ENCODE measurements at regions of chr17 and their contacts with region 1.

Region 1: GRCh38 chr17:33038740-33039139 is 47.1 kb downstream of the SPACA3 start:
- DNase-seq: no peak
- H3K4me3 ChIP-seq: no peak overlapping the region
- H3K27ac ChIP-seq: no peak overlapping the region
- H3K4me1 ChIP-seq: no peaks in the 10 kb centered on the region
- H3K27me3 ChIP-seq: peaks cover 0 to 13% (median 0%) of the 10 kb centered on the region in 3 donors
- CTCF ChIP-seq: peak in 3 of 4 experiments; percentile 24 to 30 (median 26)
- EP300 ChIP-seq: no peak
- POLR2A ChIP-seq: no peak

Region 2: GRCh38 chr17:33142705-33143299 is 104.1 kb after region 1 on chr17:
- intact Hi-C with region 1: no loop called
- DNase-seq: no peak
- H3K4me3 ChIP-seq: no peak overlapping the region
- H3K27ac ChIP-seq: no peak overlapping the region
- H3K4me1 ChIP-seq: no peaks in the 10 kb centered on the region
- H3K27me3 ChIP-seq: no peaks in the 10 kb centered on the region
- CTCF ChIP-seq: no peak
- EP300 ChIP-seq: no peak
- POLR2A ChIP-seq: no peak

Region 3: GRCh38 chr17:33169580-33170285 is 131.0 kb after region 1 on chr17:
- intact Hi-C with region 1: no loop called
- DNase-seq: no peak
- H3K4me3 ChIP-seq: no peak overlapping the region
- H3K27ac ChIP-seq: no peak overlapping the region
- H3K4me1 ChIP-seq: peaks cover 0 to 4% (median 2%) of the 10 kb centered on the region in 4 donors
- H3K27me3 ChIP-seq: no peaks in the 10 kb centered on the region
- CTCF ChIP-seq: no peak
- EP300 ChIP-seq: no peak
- POLR2A ChIP-seq: no peak

Region 4: GRCh38 chr17:33674685-33675084 is 635.9 kb after region 1 on chr17:
- intact Hi-C with region 1: loop called (anchors 5 kb)
- DNase-seq: no peak
- H3K4me3 ChIP-seq: no peak overlapping the region
- H3K27ac ChIP-seq: no peak overlapping the region
- H3K4me1 ChIP-seq: no peaks in the 10 kb centered on the region
- H3K27me3 ChIP-seq: no peaks in the 10 kb centered on the region
- CTCF ChIP-seq: peak in 3 of 4 experiments; percentile 54 to 68 (median 57)
- EP300 ChIP-seq: no peak
- POLR2A ChIP-seq: no peak